Right ventricle myocardium inferior (tissue), 1 donor: ENCODE measurements at regions of chr17 and their contacts with region 1.

Region 1: GRCh38 chr17:71842991-71843390 is 277.8 kb upstream of the SOX9 start:
- DNase-seq: no peak
- ATAC-seq: no peak

Region 2: GRCh38 chr17:71625330-71625729 is 217.7 kb before region 1 on chr17:
- intact Hi-C with region 1: no loop called
- DNase-seq: no peak
- ATAC-seq: no peak

Region 3: DNA sequence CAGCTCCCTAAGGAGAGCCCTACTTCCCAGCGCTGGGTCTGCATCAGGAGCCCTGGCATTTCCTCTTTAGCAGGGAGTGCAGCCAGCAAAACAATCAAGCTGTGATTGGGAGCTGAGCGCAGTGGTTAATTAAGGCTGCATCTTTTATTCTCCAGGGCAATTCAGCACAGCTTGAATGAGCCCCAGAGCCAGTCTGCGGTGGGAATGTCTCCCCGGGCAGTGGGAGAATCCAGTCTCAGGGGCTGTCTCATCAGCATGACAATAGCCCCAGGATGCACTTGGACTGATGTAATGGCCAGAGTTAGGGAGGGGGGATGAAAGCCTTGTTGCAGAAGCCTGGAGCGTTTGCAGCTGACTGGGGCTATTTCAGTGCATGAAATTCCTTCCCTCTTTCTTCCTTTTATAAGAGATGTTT is 14.8 kb before region 1 on chr17:
- intact Hi-C with region 1: loop called (anchors 1 kb)
- DNase-seq: no peak
- ATAC-seq: no peak